Colonic mucosa (tissue), 4 donors: ENCODE measurements at regions of chr3 and their contacts with region 1.

Region 1: GRCh38 chr3:150703299-150704134 is at the start of gene ERICH6:
- DNase-seq: peak; percentile 92
- H3K4me3 ChIP-seq: peak within 1 kb of the TSS; percentile 56
- H3K27ac ChIP-seq: peak within 1 kb of the TSS; percentile 63
- H3K4me1 ChIP-seq: peaks cover 3% of the 10 kb centered on the region
- H3K27me3 ChIP-seq: no peaks in the 10 kb centered on the region
- CTCF ChIP-seq: no peak
- total RNA-seq, gene ERICH6: not detected

Region 2: DNA sequence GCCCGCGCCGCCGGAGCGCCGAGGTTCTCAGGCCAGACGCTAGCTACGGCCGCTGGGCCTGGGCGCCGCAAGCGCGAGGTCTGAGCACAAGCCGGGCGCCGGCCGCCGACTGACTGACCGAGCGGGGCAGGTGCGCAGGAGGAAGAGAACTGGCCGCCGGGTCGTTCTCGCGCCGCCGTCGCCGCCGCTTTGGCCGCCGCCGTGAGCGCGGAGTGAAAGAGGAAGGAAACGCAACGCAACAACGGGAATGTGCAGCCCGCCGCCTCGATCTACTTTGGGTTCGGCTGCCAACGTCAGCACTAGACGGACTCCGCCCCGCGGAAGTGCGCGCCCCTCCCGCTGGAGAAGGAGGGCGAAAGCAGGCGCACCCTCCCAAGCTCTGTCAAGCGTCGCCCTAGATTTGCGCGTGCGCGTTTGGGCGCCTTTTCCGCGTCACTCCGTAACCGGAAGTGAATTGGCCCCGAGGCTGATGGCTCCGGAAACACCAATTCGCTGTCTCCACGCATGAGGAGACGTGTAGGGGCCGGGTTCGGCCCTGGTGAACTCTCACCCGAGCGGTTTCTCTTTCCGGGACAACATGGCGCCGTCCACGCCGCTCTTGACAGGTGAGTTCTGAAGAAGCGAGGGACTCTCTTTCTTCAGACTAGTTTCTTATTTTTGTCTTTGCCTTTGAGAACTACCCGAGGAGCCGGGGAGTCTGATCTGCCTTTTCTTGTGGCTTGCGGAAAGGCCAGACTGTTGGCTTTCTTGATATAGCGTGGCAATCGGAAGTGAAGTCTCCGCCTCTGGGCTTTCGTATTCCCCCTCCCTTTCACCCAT is 157.1 kb before region 1 on chr3 and contains the starts of genes EIF2A and SERP1:
- intact Hi-C with region 1: loop called (anchors 10 kb)
- DNase-seq: peak; percentile 99
- H3K4me3 ChIP-seq: peak within 1 kb of the TSS; percentile 87
- H3K27ac ChIP-seq: peak within 1 kb of the TSS; percentile 99
- H3K4me1 ChIP-seq: no peaks in the 10 kb centered on the region
- H3K27me3 ChIP-seq: no peaks in the 10 kb centered on the region
- CTCF ChIP-seq: no peak
- total RNA-seq, gene EIF2A: 77.2 to 81.9 TPM
- total RNA-seq, gene SERP1: 113 to 153 TPM

Region 3: GRCh38 chr3:150603153-150603979 is 100.2 kb before region 1 on chr3 and contains the start of gene SELENOT:
- intact Hi-C with region 1: loop called (anchors 10 kb)
- DNase-seq: peak; percentile 94
- H3K4me3 ChIP-seq: peak within 1 kb of the TSS; percentile 74
- H3K27ac ChIP-seq: peak within 1 kb of the TSS; percentile 96
- H3K4me1 ChIP-seq: peaks cover 18% of the 10 kb centered on the region
- H3K27me3 ChIP-seq: no peaks in the 10 kb centered on the region
- CTCF ChIP-seq: no peak
- total RNA-seq, gene SELENOT: 114 to 117 TPM